Sciatic nerve (tissue), 2 donors: ENCODE measurements at regions of chr17 and their contacts with region 1.

Region 1: DNA sequence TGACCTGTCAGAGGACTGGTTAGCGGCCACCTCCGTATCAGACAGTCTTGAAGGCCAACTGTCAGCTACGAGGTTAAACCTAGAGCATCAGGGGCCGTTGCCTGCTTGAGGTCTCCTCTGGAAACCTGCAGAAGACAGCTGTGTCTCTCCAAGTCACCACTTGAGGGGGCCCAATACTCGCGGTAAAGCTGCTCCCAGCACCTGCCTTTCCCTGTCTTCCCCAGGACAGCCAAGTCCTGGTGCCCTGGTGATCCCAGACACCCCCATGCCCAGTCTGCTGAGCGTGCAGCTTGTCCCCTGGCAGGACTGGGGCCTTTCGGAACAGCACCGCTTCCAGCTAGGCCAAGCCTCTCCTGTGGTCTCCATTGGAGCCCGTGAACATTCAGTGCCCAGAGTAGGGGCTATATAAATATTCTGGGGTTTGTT is 80.1 kb downstream of the DNAH17 start:
- DNase-seq: peak; percentile 82
- ATAC-seq: peak; percentile 82

Region 2: GRCh38 chr17:78555746-78556401 is 58.7 kb after region 1 on chr17:
- intact Hi-C with region 1: no loop called
- DNase-seq: no peak
- ATAC-seq: no peak

Region 3: DNA sequence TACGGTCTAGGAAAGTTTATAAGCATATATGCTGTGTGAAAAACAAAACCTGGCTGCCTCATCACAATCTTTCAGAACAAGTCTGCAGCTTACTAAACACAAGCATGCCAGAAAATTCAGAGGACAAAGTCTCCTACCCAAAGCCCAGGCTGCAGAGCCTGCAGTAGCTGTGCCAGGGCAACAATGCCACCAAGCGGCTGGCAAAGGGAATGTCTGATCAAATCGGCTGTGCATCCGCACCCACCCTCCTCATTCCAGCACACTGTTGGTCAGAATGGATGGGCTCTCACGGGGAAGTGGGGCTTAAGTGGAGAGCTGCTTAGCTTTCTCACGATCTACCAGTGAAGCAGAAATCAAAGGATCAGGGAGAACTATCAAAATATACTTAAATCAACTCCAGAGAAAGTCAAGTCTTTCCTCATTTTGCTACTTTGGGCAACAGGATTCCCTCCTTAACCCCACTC is 211.4 kb after region 1 on chr17:
- intact Hi-C with region 1: loop called (anchors 10 kb)
- DNase-seq: peak; percentile 80
- ATAC-seq: peak; percentile 92

Region 4: GRCh38 chr17:78828470-78829185 is 331.5 kb after region 1 on chr17:
- intact Hi-C with region 1: loop called (anchors 5 kb)
- DNase-seq: no peak
- ATAC-seq: no peak